OCI-LY7 (cell line): ENCODE measurements at regions of chr6 and their contacts with region 1.

Region 1: GRCh38 chr6:27902335-27903314 is 9.6 kb downstream of the OR2B2 start:
- DNase-seq: peak; percentile 81
- H3K4me3 ChIP-seq: peak overlapping the region; percentile 73
- H3K27ac ChIP-seq: peak overlapping the region; percentile 78
- H3K4me1 ChIP-seq: peaks cover 12% of the 10 kb centered on the region
- CTCF ChIP-seq: no peak

Region 2: DNA sequence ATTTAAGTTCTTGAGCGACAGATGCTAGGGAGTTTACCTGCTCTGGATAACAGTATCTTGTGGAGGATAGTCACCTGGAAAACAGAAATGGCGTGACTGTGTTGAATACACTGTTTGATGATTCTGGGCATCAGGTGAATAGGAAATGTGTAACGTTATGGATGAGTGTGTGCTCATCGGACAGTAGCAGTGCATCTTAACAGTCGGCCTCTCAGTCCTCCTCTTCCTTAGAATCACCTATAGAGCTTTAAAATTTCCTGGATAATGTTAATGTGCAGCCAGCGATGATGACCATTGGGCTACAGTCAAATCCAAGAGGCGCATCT is 208.1 kb before region 1 on chr6:
- CTCF ChIA-PET with region 1: no interaction called
- POLR2A ChIA-PET with region 1: no interaction called
- intact Hi-C with region 1: loop called (anchors 1 kb)
- DNase-seq: no peak
- H3K4me3 ChIP-seq: peak overlapping the region; percentile 83
- H3K27ac ChIP-seq: no peak overlapping the region
- H3K4me1 ChIP-seq: peaks cover 6% of the 10 kb centered on the region
- CTCF ChIP-seq: no peak; the same call in 1 of the 2 replicates

Region 3: GRCh38 chr6:28080631-28081485 is 178.2 kb after region 1 on chr6:
- CTCF ChIA-PET with region 1: no interaction called
- POLR2A ChIA-PET with region 1: no interaction called
- intact Hi-C with region 1: loop called (anchors 2 kb)
- DNase-seq: peak; percentile 95
- H3K4me3 ChIP-seq: peak overlapping the region; percentile 87
- H3K27ac ChIP-seq: peak overlapping the region; percentile 70
- H3K4me1 ChIP-seq: peaks cover 12% of the 10 kb centered on the region
- CTCF ChIP-seq: no peak

Region 4: GRCh38 chr6:28657769-28658465 is 755.3 kb after region 1 on chr6:
- CTCF ChIA-PET with region 1: no interaction called
- POLR2A ChIA-PET with region 1: interaction called, 3 read pairs
- intact Hi-C with region 1: loop called (anchors 5 kb)
- DNase-seq: peak; percentile 78
- H3K4me3 ChIP-seq: peak overlapping the region; percentile 82
- H3K27ac ChIP-seq: peak overlapping the region; percentile 16
- H3K4me1 ChIP-seq: peaks cover 18% of the 10 kb centered on the region
- CTCF ChIP-seq: no peak

Region 5: DNA sequence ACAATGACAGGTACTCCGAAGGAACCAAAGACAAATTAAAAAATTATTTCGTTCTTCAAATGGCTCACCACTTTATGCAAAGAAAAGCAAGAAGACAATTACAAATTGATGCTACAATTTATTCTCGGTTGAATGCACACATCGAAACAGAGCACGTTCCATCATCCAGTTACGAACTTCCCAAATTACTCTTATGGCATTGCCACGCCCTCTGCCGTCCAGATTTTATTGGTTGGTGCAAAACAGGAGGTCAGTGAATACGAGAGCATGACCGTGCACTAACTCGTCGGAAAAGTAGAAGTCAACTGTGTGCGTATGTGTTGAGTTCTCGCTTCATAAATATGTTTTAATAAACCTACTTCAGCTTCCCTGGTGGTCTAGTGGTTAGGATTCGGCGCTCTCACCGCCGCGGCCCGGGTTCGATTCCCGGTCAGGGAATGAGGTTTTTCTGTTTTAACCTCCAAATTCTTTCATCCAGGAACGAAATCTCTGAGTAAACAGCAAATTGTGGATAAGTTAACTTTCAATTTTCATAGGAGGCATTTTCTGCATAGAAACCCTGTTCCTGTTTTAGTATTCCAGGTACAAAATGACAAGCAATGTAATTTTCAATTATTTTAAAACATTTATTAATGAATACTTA is 1079.3 kb after region 1 on chr6:
- CTCF ChIA-PET with region 1: no interaction called
- POLR2A ChIA-PET with region 1: no interaction called
- intact Hi-C with region 1: loop called (anchors 10 kb)
- DNase-seq: peak; percentile 84
- H3K4me3 ChIP-seq: peak overlapping the region; percentile 98
- H3K27ac ChIP-seq: peak overlapping the region; percentile 37
- H3K4me1 ChIP-seq: peaks cover 22% of the 10 kb centered on the region
- CTCF ChIP-seq: 0 out of 2 replicates have a peak, but pooled peaks have one; percentile 26